Posterior cingulate gyrus (tissue), 11 donors: ENCODE measurements at regions of chr6 and their contacts with region 1.

Region 1: DNA sequence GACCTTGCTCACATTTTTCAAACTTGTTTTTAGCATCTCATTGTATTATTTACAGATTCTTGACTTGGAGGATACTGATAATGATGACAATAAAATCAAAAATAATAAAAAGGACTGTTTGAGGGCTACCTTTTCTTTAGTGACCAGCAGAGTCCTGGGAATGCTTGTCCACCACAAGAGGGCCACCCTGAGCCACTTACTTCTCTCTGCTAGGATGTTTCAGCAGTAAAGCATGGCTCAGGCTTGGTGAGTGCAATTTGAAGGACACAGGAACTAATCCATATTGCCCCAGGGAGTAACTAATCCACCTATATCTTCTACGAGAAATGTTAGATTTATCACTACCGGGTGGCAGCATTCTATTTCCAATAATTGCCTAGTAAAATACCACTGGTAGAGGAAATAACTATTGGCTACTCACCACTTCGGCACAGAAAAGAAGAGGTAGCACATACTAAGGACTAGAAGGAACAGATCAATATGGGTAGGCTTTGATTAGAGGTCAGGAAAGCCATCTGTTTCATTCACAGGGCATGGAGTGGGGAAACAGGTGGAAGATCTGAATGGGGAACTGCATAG is 5.8 kb upstream of the KIAA0408 start:
- DNase-seq: peak in 9 of 10 donors; percentile 43 to 93 (median 77)

Region 2: DNA sequence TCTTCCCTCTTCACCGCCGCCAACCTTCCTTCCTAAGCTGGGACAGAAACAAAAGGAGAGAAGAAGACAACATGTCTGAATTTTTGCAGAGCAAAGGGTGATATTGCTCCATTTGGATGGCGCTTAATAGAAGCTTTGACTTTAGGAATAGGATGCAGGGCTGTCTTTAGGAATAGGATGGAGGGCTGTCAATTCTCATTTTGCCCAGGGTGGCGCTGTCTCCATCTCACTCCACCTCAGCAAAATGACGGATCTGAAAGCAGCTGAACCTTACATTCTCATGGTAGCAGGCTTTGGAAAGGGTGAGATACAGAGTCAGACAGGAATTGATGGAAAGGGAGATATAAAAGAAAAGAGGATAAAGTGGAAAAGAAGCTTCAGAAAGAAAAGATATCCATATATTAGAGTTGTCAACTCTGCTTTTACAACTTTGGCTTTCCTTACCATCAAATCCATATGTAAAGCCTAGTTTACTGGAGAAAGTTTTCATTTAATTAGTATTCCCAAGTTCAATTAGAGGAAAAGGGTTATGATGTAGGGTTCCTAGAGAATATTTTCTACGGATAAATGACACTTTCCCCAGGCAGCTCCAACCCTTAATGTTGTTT is 51.8 kb after region 1 on chr6:
- intact Hi-C with region 1: loop called (anchors 5 kb)
- DNase-seq: peak in 9 of 10 donors; percentile 47 to 94 (median 60)

Region 3: DNA sequence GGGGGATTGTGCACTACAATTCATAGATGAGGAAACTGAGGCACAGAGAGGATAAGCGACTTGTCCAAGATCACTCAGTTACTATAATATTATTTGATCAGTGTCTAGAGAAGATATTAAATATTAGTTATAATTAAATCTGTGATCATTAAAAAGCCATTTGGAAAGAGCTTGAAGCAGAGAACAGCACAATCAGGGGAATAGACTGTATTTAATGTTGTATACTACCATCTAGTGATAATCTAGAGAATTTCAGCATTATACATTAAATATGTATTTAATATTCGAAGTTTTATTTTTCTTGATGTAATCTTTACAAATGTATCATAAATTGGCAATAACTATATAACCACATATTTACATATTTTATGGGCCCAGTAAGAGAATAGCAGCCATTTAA is 74.3 kb after region 1 on chr6:
- intact Hi-C with region 1: loop called (anchors 2 kb)
- DNase-seq: no peak

Region 4: DNA sequence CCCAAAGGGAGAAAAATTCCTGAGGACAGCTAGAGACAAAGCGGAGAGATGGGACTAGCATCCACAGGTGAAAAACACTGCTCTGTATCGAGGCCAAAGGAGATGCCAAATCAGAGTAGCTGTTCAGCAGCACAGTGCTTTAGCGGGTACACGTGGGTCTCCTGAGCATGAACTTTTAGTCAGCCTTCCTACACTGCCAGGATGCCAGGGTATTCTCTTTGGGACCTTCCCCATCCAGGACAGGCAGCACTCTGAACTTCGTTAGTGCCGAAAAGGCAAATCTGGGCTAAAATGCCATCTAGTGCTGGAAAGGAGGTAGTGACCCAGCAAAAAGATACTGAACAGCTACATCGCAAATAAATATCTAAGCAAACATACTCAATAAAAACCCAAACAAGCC is 176.9 kb after region 1 on chr6:
- intact Hi-C with region 1: loop called (anchors 5 kb)
- DNase-seq: peak in 1 of 10 donors; percentile 49

Region 5: GRCh38 chr6:127690092-127690491 is 225.1 kb after region 1 on chr6:
- intact Hi-C with region 1: no loop called
- DNase-seq: no peak